ENCODE measurements at regions of chr15 and their contacts with region 1.

Region 1: GRCh38 chr15:89630974-89631901 is 24.0 kb downstream of the KIF7 start:
- DNase-seq: no peak
- H3K4me3 ChIP-seq: no peak overlapping the region
- H3K27ac ChIP-seq: no peak overlapping the region
- H3K4me1 ChIP-seq: no peaks in the 10 kb centered on the region
- H3K27me3 ChIP-seq: no peaks in the 10 kb centered on the region
- CTCF ChIP-seq: no peak

Region 2: GRCh38 chr15:89167267-89168176 is 463.7 kb before region 1 on chr15:
- CTCF ChIA-PET with region 1: no interaction called
- dilution Hi-C with region 1: no loop called
- in situ Hi-C with region 1: no loop called
- intact Hi-C with region 1: no loop called
- DNase-seq: peak; percentile 90
- H3K4me3 ChIP-seq: no peak overlapping the region
- H3K27ac ChIP-seq: peak overlapping the region; percentile 89
- H3K4me1 ChIP-seq: peaks cover 37% of the 10 kb centered on the region
- H3K27me3 ChIP-seq: no peaks in the 10 kb centered on the region
- CTCF ChIP-seq: no peak

Region 3: GRCh38 chr15:89575146-89575655 is 56.0 kb before region 1 on chr15 and contains the start of gene TICRR:
- CTCF ChIA-PET with region 1: no interaction called
- dilution Hi-C with region 1: loop called (anchors 5 kb)
- in situ Hi-C with region 1: no loop called
- intact Hi-C with region 1: no loop called
- DNase-seq: peak; percentile 100
- H3K4me3 ChIP-seq: peak within 1 kb of the TSS; percentile 73 to 85 (median 83)
- H3K27ac ChIP-seq: peak within 1 kb of the TSS; percentile 68
- H3K4me1 ChIP-seq: peaks cover 21% of the 10 kb centered on the region
- H3K27me3 ChIP-seq: no peaks in the 10 kb centered on the region
- CTCF ChIP-seq: no peak
- total RNA-seq, gene TICRR: 0.67 to 13.7 TPM